MCF 10A (cell line): ENCODE measurements at regions of chr1 and their contacts with region 1.

Region 1: GRCh38 chr1:165697881-165698760 is at the start of gene ALDH9A1:
- DNase-seq: peak; percentile 90
- H3K4me3 Mint-ChIP-seq: peak within 1 kb of the TSS; percentile 97
- H3K27ac Mint-ChIP-seq: peak within 1 kb of the TSS; percentile 80
- H3K4me1 Mint-ChIP-seq: peaks cover 11% of the 10 kb centered on the region
- H3K27me3 Mint-ChIP-seq: no peaks in the 10 kb centered on the region
- CTCF ChIP-seq: peak; percentile 40
- total RNA-seq, gene ALDH9A1: 56.3 and 67.1 TPM in 2 replicates

Region 2: GRCh38 chr1:165383067-165383466 is 315.1 kb before region 1 on chr1:
- CTCF ChIA-PET with region 1: interaction called, 10 read pairs
- POLR2A ChIA-PET with region 1: interaction called, 3 read pairs
- intact Hi-C with region 1: no loop called
- DNase-seq: peak; percentile 95
- H3K4me3 Mint-ChIP-seq: no peak overlapping the region
- H3K27ac Mint-ChIP-seq: peak overlapping the region; percentile 5
- H3K4me1 Mint-ChIP-seq: peaks cover 19% of the 10 kb centered on the region
- H3K27me3 Mint-ChIP-seq: peaks cover 22% of the 10 kb centered on the region
- CTCF ChIP-seq: no peak

Region 3: DNA sequence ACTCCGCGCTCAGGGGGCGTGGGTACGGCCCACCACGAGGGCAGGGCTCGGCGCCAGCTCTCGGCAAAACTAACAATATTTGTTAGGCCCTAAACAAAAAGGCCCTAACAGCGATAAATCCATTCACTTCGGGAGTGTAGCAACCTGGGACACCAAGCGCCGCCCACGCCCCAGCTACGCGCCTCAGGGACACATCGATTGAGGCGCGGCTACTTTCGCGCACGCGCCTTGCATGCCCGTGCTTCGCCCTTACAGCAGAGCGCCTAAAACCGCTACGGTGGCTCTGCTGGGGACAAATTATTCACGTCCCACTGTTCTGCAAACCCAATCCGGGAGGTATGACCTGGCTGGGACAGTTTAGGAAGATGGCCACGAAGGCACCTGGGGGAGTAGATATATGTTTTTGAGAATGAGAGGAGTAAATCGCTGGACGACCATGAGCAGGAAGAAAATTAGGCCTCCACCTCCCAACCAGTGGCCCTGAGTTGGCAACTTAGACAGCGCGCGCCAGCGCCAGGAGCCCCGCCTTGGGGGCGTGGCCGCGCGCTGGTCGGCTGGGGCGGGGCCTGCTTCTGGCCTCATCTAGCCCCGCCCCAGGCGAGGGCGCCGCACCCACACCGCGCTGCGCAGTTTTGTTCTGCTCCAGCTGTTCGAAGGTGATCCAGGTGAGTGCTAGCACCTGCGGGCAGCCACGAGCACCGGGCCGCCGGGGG is 67.3 kb before region 1 on chr1 and contains the start of gene MGST3:
- CTCF ChIA-PET with region 1: interaction called, 14 read pairs
- POLR2A ChIA-PET with region 1: interaction called, 128 read pairs
- intact Hi-C with region 1: loop called (anchors 1 kb)
- DNase-seq: peak; percentile 99
- H3K4me3 Mint-ChIP-seq: no peak within 1 kb of the TSS
- H3K27ac Mint-ChIP-seq: no peak within 1 kb of the TSS
- H3K4me1 Mint-ChIP-seq: peaks cover 22% of the 10 kb centered on the region
- H3K27me3 Mint-ChIP-seq: no peaks in the 10 kb centered on the region
- CTCF ChIP-seq: no peak
- total RNA-seq, gene MGST3: 75.5 and 97.1 TPM in 2 replicates

Region 4: DNA sequence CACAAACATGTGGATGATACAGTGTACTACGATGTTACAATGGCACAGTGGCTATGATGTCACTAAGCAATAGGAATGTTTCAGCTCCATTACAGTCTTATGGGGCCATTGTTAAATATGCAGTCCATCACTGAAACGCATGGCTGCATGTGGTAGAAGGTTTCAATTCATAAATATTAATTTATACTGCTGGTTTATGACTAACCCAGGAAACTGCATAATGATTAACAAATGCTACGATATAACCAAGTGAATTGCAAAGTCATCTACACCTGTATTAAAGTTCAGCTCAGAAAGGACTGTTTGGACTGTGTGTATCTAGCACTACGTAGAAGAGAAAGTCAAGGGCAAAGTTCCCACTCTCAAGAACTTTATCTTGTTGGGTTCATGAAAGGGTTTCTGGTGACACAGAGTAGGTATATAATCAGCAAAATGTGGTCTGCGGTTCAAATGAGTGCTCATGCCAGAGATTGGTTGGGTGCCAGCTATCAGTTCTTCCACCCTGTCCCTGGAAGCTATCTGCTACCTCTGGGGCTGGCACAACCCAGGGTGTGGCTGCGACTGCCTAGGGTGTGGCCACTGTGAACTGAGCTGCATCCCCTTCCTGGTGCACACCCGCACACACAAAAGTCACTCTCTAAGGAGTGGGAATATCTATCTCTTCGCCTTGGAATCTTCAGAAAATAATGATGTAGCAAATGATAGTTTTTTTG is 52.3 kb before region 1 on chr1:
- CTCF ChIA-PET with region 1: interaction called, 6 read pairs
- POLR2A ChIA-PET with region 1: interaction called, 17 read pairs
- intact Hi-C with region 1: no loop called
- DNase-seq: peak; percentile 42
- H3K4me3 Mint-ChIP-seq: no peak overlapping the region
- H3K27ac Mint-ChIP-seq: no peak overlapping the region
- H3K4me1 Mint-ChIP-seq: peaks cover 17% of the 10 kb centered on the region
- H3K27me3 Mint-ChIP-seq: no peaks in the 10 kb centered on the region
- CTCF ChIP-seq: no peak

Region 5: DNA sequence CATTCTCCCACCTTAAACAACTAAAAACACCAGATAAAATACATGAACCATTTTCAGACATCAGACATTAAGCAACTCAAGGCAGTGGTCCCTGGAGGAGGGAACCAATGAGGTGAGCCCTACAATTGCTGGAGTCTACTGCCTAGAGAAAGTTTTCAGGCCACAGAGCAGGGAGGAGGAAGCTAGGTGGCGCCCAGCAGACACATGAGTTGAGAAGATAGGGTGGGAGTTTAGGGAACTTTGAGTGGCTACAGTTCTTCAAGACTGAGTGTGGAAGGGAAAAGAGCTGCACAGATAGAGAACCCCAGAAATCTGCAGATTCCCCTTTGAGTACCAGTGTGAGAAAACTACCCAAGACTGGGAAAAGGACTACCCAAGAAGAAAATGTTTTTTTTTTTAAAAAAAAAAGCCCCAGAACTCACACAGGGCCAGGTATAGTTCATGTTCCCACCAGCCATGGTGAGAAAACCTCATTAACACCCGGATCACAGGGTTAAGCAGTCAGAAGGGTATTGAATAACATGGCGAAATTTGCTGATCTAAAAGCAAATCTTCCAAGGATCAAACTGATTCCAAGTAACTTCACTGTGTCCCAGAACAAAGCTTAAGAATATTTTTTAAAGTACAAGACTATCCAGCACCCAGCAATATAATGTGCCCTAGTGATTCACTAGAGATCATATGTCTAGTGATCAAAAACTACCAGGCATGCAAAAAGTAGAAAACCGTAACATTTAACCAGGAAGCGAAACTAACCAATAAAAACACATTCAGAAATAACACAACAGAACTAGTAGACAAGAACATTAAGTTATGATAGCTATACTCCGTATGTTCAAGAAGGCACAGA is 11.8 kb before region 1 on chr1:
- CTCF ChIA-PET with region 1: interaction called, 22 read pairs
- POLR2A ChIA-PET with region 1: interaction called, 10 read pairs
- intact Hi-C with region 1: no loop called
- DNase-seq: no peak
- H3K4me3 Mint-ChIP-seq: no peak overlapping the region
- H3K27ac Mint-ChIP-seq: peak overlapping the region; percentile 5
- H3K4me1 Mint-ChIP-seq: peaks cover 15% of the 10 kb centered on the region
- H3K27me3 Mint-ChIP-seq: no peaks in the 10 kb centered on the region
- CTCF ChIP-seq: no peak

Region 6: DNA sequence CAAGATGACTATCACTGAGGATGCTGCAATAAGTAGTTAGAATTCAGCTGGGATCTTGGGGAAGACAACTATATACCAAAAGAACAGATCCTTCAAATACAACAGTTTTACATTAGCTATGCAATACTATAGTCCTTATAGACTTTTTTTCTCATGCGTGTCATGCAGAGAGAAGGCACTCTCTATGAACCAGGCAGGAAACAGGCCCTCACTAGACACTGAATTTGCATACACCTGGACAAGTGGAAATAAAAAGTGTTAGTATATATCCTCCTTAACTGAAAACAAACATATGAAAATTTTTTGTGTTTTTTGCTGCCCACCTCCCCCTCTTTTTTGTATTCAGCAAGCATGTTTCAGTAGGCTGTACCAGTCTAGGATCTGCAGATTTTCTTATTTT is 40.7 kb after region 1 on chr1:
- CTCF ChIA-PET with region 1: interaction called, 14 read pairs
- POLR2A ChIA-PET with region 1: interaction called, 7 read pairs
- intact Hi-C with region 1: no loop called
- DNase-seq: no peak
- H3K4me3 Mint-ChIP-seq: no peak overlapping the region
- H3K27ac Mint-ChIP-seq: no peak overlapping the region
- H3K4me1 Mint-ChIP-seq: peaks cover 10% of the 10 kb centered on the region
- H3K27me3 Mint-ChIP-seq: no peaks in the 10 kb centered on the region
- CTCF ChIP-seq: no peak

Region 7: DNA sequence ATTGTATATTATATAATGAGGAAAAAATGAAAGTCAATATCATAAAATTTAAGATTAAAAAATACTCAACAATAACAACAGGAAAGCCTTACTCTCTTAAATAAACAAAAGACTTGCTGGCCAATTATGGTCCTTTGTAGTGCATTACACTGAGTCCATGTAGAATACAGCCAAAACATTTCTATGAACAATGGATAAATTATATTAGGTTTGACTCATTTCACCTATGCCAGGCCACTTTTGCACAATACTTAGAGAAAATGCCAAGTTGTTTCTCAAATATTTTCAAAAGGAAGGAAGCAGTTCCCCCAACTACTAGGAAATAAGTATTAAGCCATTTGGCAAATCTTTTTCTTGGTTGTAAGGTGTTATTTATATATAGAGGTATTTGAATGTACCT is 109.5 kb after region 1 on chr1:
- CTCF ChIA-PET with region 1: no interaction called
- POLR2A ChIA-PET with region 1: no interaction called
- intact Hi-C with region 1: no loop called
- DNase-seq: peak; percentile 51
- H3K4me3 Mint-ChIP-seq: no peak overlapping the region
- H3K27ac Mint-ChIP-seq: no peak overlapping the region
- H3K4me1 Mint-ChIP-seq: no peaks in the 10 kb centered on the region
- H3K27me3 Mint-ChIP-seq: no peaks in the 10 kb centered on the region
- CTCF ChIP-seq: no peak

Region 8: GRCh38 chr1:165827268-165828102 is 129.4 kb after region 1 on chr1 and contains the start of gene UCK2:
- CTCF ChIA-PET with region 1: interaction called, 3 read pairs
- POLR2A ChIA-PET with region 1: interaction called, 47 read pairs
- intact Hi-C with region 1: no loop called
- DNase-seq: peak; percentile 86
- H3K4me3 Mint-ChIP-seq: peak within 1 kb of the TSS; percentile 96
- H3K27ac Mint-ChIP-seq: peak within 1 kb of the TSS; percentile 90
- H3K4me1 Mint-ChIP-seq: peaks cover 25% of the 10 kb centered on the region
- H3K27me3 Mint-ChIP-seq: no peaks in the 10 kb centered on the region
- CTCF ChIP-seq: peak; percentile 6
- total RNA-seq, gene UCK2: 108 and 144 TPM in 2 replicates